CD8-positive, alpha-beta T cell (primary cell): ENCODE measurements at regions of chr19 and their contacts with region 1.

Region 1: GRCh38 chr19:52993323-52994178 is 20.2 kb upstream of the ERVV-1 start:
- DNase-seq: peak; percentile 64 to 84 (median 77)
- ATAC-seq: peak; percentile 96
- H3K4me3 ChIP-seq: peak overlapping the region; percentile 38 to 65
- H3K4me3 Mint-ChIP-seq: peak overlapping the region; percentile 90
- H3K27ac ChIP-seq: no peak overlapping the region
- H3K27ac Mint-ChIP-seq: peak overlapping the region; percentile 60
- H3K4me1 ChIP-seq: peaks cover 6% of the 10 kb centered on the region
- H3K4me1 Mint-ChIP-seq: peaks cover 23% of the 10 kb centered on the region
- H3K27me3 ChIP-seq: no peaks in the 10 kb centered on the region
- H3K27me3 Mint-ChIP-seq: peaks cover 4% of the 10 kb centered on the region
- CTCF ChIP-seq: peak; percentile 81

Region 2: GRCh38 chr19:52922841-52923777 is 70.4 kb before region 1 on chr19 and contains the start of gene ZNF888:
- CTCF ChIA-PET with region 1: interaction called, 3 read pairs
- POLR2A ChIA-PET with region 1: no interaction called
- intact Hi-C with region 1: loop called (anchors 1 kb)
- DNase-seq: peak; percentile 74 to 90 (median 82)
- ATAC-seq: peak; percentile 100
- H3K4me3 ChIP-seq: peak within 1 kb of the TSS; percentile 93 to 97
- H3K4me3 Mint-ChIP-seq: peak within 1 kb of the TSS; percentile 94
- H3K27ac ChIP-seq: peak within 1 kb of the TSS; percentile 62 to 75
- H3K27ac Mint-ChIP-seq: peak within 1 kb of the TSS; percentile 90
- H3K4me1 ChIP-seq: peaks cover 14% of the 10 kb centered on the region
- H3K4me1 Mint-ChIP-seq: peaks cover 33% of the 10 kb centered on the region
- H3K27me3 ChIP-seq: no peaks in the 10 kb centered on the region
- H3K27me3 Mint-ChIP-seq: no peaks in the 10 kb centered on the region
- CTCF ChIP-seq: no peak
- total RNA-seq, gene ZNF888: 4.5 to 4.9 TPM

Region 3: GRCh38 chr19:52942386-52943133 is 51.0 kb before region 1 on chr19:
- CTCF ChIA-PET with region 1: no interaction called
- POLR2A ChIA-PET with region 1: no interaction called
- intact Hi-C with region 1: loop called (anchors 5 kb)
- DNase-seq: peak; percentile 91 to 97 (median 95)
- ATAC-seq: peak; percentile 99
- H3K4me3 ChIP-seq: peak overlapping the region; percentile 88 to 91
- H3K4me3 Mint-ChIP-seq: peak overlapping the region; percentile 95
- H3K27ac ChIP-seq: peak overlapping the region; percentile 66 to 86
- H3K27ac Mint-ChIP-seq: peak overlapping the region; percentile 93
- H3K4me1 ChIP-seq: peaks cover 7% of the 10 kb centered on the region
- H3K4me1 Mint-ChIP-seq: peaks cover 28% of the 10 kb centered on the region
- H3K27me3 ChIP-seq: no peaks in the 10 kb centered on the region
- H3K27me3 Mint-ChIP-seq: no peaks in the 10 kb centered on the region
- CTCF ChIP-seq: no peak

Region 4: DNA sequence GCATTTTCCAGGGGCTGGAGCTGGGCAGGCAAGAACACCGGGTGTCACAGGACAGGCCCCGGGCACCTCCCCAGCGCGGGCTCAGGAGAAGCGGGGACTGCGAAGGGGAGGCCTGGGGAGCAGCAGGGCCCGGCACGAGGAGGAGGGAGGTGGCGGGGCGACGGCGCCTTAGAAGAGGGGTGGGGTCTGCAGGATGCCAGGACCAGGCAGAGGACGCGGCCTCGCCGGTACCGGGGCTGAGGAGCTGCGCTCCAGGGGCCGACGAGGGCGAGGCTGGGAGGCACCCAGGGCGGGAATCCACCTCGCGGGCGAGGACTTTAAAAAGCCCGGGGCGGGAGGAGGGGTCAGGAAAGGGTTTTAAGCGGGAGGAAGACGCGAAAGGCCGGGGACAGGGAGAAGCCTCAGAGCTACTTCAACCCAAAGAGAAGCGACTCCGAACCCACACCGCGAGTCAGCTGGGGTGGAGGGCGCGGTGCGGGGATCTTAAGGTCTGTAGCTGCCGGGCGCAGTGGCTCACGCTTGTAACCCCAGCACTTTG is 164.6 kb after region 1 on chr19:
- CTCF ChIA-PET with region 1: no interaction called
- POLR2A ChIA-PET with region 1: no interaction called
- intact Hi-C with region 1: loop called in 1 of 2 experiments (anchors 10 kb)
- DNase-seq: peak in 7 of 9 experiments; percentile 4 to 63 (median 47)
- ATAC-seq: peak; percentile 42
- H3K4me3 ChIP-seq: peak overlapping the region; percentile 59 to 60
- H3K4me3 Mint-ChIP-seq: peak overlapping the region; percentile 77
- H3K27ac ChIP-seq: peak overlapping the region; percentile 44 to 52
- H3K27ac Mint-ChIP-seq: peak overlapping the region; percentile 79
- H3K4me1 ChIP-seq: peaks cover 13% of the 10 kb centered on the region
- H3K4me1 Mint-ChIP-seq: peaks cover 23% of the 10 kb centered on the region
- H3K27me3 ChIP-seq: no peaks in the 10 kb centered on the region
- H3K27me3 Mint-ChIP-seq: no peaks in the 10 kb centered on the region
- CTCF ChIP-seq: no peak